Activated CD4-positive, alpha-beta T cell treated with anti-CD3 and anti-CD28 coated beads for 36 hours (primary cell): ENCODE measurements at regions of chr3 and their contacts with region 1.

Region 1: GRCh38 chr3:40971191-40972168 is 227.8 kb upstream of the CTNNB1 start:
- DNase-seq: peak; percentile 66
- ATAC-seq: peak; percentile 93
- H3K4me3 Mint-ChIP-seq: peak overlapping the region; percentile 4
- H3K27ac Mint-ChIP-seq: peak overlapping the region; percentile 79
- H3K4me1 Mint-ChIP-seq: peaks cover 23% of the 10 kb centered on the region
- H3K27me3 Mint-ChIP-seq: peaks cover 27% of the 10 kb centered on the region

Region 2: GRCh38 chr3:40961104-40961857 is 10.2 kb before region 1 on chr3:
- CTCF ChIA-PET with region 1: interaction called, 6 read pairs
- POLR2A ChIA-PET with region 1: no interaction called
- intact Hi-C with region 1: loop called in 1 of 2 experiments (anchors 1 kb)
- DNase-seq: peak; percentile 20
- ATAC-seq: peak; percentile 83
- H3K4me3 Mint-ChIP-seq: no peak overlapping the region
- H3K27ac Mint-ChIP-seq: no peak overlapping the region
- H3K4me1 Mint-ChIP-seq: peaks cover 11% of the 10 kb centered on the region
- H3K27me3 Mint-ChIP-seq: peaks cover 16% of the 10 kb centered on the region

Region 3: GRCh38 chr3:41117398-41117870 is 146.0 kb after region 1 on chr3:
- CTCF ChIA-PET with region 1: no interaction called
- POLR2A ChIA-PET with region 1: no interaction called
- intact Hi-C with region 1: loop called in 1 of 2 experiments (anchors 1 kb)
- DNase-seq: peak; percentile 94
- ATAC-seq: peak; percentile 96
- H3K4me3 Mint-ChIP-seq: peak overlapping the region; percentile 2
- H3K27ac Mint-ChIP-seq: peak overlapping the region; percentile 86
- H3K4me1 Mint-ChIP-seq: peaks cover 28% of the 10 kb centered on the region
- H3K27me3 Mint-ChIP-seq: no peaks in the 10 kb centered on the region

Region 4: GRCh38 chr3:41188268-41188667 is 216.8 kb after region 1 on chr3:
- CTCF ChIA-PET with region 1: no interaction called
- POLR2A ChIA-PET with region 1: no interaction called
- intact Hi-C with region 1: loop called (anchors 1 to 2 kb)
- DNase-seq: peak; percentile 64
- ATAC-seq: peak; percentile 97
- H3K4me3 Mint-ChIP-seq: no peak overlapping the region
- H3K27ac Mint-ChIP-seq: peak overlapping the region; percentile 34
- H3K4me1 Mint-ChIP-seq: peaks cover 27% of the 10 kb centered on the region
- H3K27me3 Mint-ChIP-seq: peaks cover 6% of the 10 kb centered on the region

Region 5: GRCh38 chr3:41608347-41608746 is 636.9 kb after region 1 on chr3:
- CTCF ChIA-PET with region 1: no interaction called
- POLR2A ChIA-PET with region 1: no interaction called
- intact Hi-C with region 1: loop called in 1 of 2 experiments (anchors 5 kb)
- DNase-seq: no peak
- ATAC-seq: peak; percentile 84
- H3K4me3 Mint-ChIP-seq: peak overlapping the region; percentile 23
- H3K27ac Mint-ChIP-seq: peak overlapping the region; percentile 73
- H3K4me1 Mint-ChIP-seq: peaks cover 18% of the 10 kb centered on the region
- H3K27me3 Mint-ChIP-seq: no peaks in the 10 kb centered on the region

Region 6: GRCh38 chr3:41836360-41837134 is 865.1 kb after region 1 on chr3:
- CTCF ChIA-PET with region 1: no interaction called
- POLR2A ChIA-PET with region 1: no interaction called
- intact Hi-C with region 1: loop called in 1 of 2 experiments (anchors 2 kb)
- DNase-seq: peak; percentile 32
- ATAC-seq: peak; percentile 90
- H3K4me3 Mint-ChIP-seq: no peak overlapping the region
- H3K27ac Mint-ChIP-seq: peak overlapping the region; percentile 13
- H3K4me1 Mint-ChIP-seq: peaks cover 20% of the 10 kb centered on the region
- H3K27me3 Mint-ChIP-seq: no peaks in the 10 kb centered on the region